ENCODE measurements at regions of chr13 and their contacts with region 1.

Region 1: DNA sequence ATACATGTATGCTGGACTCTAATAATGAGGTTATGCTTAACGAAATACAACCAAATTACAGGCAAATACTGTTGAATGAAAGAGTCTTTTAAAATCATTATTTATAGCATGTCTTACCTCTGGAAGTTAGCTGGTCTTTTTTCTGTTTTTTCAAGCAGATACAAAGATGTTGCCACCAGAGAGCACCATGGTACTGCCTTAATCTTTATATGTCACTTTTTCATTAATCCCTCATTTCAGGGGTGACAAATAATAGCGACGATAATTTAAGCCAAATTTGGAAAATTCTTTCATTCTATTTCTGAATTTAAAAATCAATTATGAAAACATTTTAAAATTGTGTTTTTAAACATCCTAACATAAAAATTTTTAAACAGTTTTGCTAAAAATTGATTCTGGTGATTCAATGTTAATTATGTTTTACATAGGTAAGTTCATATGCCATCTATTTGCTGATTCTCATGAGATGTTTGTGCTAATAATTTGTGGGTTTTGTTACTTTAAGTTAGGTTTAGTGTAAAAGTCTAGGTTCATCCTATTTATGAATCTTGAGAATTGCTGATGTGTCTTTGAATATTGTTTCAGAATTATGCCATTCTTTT is 379.3 kb upstream of the SGCG start:
- DNase-seq: no peak
- H3K4me3 Mint-ChIP-seq: no peak overlapping the region
- H3K27ac Mint-ChIP-seq: no peak overlapping the region
- H3K4me1 Mint-ChIP-seq: peaks cover 5% of the 10 kb centered on the region
- H3K27me3 Mint-ChIP-seq: no peaks in the 10 kb centered on the region
- CTCF ChIP-seq: no peak

Region 2: DNA sequence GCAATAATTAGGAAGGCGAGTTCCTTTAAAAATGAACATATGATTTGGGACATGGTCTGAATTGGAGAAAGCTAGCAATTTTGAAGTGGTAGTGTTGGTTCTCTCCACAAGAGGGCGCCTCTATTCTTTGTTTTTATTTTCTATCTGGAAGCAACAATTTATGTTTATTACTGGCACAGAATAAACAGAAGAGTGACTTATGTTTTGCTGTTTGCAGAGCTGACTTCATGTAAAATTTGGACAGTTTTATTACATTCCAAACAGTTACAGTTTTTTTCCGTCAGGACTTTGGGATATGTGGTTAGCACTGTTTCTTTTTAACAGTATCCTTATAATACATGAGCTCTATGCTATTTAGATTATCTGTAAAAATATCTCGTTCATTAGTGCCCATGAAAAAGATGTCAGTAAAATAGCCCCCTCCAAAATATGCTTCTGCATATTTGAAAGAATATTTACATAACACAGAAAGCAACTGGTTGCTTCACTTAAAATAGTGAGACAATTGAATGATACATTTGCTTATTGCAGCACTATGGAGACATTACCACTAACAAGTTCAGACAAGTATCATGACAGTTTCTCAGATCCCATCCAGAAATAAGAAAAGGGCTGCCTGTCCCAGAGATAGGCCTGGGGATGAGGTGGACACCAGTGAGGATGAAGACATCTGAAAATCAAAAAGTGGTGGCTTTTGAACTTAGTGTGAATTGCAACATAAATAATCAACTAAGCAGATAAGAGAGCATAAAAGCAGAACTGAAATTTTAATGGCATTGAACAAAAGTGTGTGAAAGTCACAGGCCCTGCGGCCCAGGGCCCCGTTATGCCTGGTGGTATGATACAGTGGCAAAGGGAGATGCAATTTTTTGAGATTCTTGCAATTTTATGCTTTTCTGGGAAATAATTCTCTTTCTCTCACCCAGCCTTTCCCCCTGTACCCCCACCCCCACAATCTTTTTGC is 1162.9 kb before region 1 on chr13:
- CTCF ChIA-PET with region 1: interaction called, 3 read pairs
- intact Hi-C with region 1: loop called (anchors 5 kb)
- DNase-seq: peak; percentile 27
- H3K4me3 Mint-ChIP-seq: no peak overlapping the region
- H3K27ac Mint-ChIP-seq: no peak overlapping the region
- H3K4me1 Mint-ChIP-seq: peaks cover 25% of the 10 kb centered on the region
- H3K27me3 Mint-ChIP-seq: no peaks in the 10 kb centered on the region
- CTCF ChIP-seq: peak; percentile 15

Region 3: GRCh38 chr13:23020223-23020843 is 218.8 kb after region 1 on chr13:
- CTCF ChIA-PET with region 1: interaction called, 17 read pairs
- intact Hi-C with region 1: loop called (anchors 1 kb)
- DNase-seq: peak; percentile 12
- H3K4me3 Mint-ChIP-seq: no peak overlapping the region
- H3K27ac Mint-ChIP-seq: no peak overlapping the region
- H3K4me1 Mint-ChIP-seq: no peaks in the 10 kb centered on the region
- H3K27me3 Mint-ChIP-seq: no peaks in the 10 kb centered on the region
- CTCF ChIP-seq: peak; percentile 40

Region 4: GRCh38 chr13:23175920-23176319 is 374.4 kb after region 1 on chr13:
- CTCF ChIA-PET with region 1: interaction called, 3 read pairs
- intact Hi-C with region 1: loop called (anchors 5 kb)
- DNase-seq: no peak
- H3K4me3 Mint-ChIP-seq: no peak overlapping the region
- H3K27ac Mint-ChIP-seq: no peak overlapping the region
- H3K4me1 Mint-ChIP-seq: no peaks in the 10 kb centered on the region
- H3K27me3 Mint-ChIP-seq: peaks cover 12% of the 10 kb centered on the region
- CTCF ChIP-seq: no peak

Region 5: DNA sequence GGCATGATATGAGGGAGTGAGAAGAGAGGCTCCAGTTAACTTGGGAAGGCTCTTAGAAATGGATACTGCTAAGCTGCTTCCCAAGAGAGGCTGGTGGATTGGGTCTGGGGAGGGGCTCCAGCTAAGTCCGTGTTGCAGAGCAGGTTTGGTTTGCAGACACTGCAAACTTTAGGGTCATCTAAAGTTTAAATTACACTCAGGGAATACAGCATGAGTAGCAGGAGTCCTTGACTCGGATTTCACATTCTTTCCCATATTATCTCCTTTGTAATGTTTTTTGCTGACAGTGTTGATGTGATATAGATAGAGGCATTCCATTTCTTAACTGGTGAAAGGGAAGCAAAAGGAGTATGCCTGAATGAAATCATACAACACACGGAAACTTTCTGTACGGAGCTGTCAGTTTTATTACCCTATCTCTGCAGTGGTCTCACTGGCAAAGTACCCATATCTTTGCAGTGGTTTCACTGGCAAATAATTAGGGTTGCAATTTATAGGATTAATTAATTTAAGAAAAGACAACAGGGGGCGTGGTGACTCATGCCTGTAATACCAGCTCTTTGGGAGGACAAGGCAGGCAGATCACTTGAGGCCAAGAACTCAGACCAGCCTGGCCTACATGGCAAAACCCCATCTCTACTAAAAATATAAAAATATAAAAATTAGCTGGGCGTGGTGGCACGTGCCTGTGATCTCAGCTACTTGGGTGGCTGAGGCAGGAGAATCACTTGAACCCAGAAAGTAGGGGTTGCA is 411.3 kb after region 1 on chr13:
- CTCF ChIA-PET with region 1: no interaction called
- intact Hi-C with region 1: no loop called
- DNase-seq: no peak
- H3K4me3 Mint-ChIP-seq: no peak overlapping the region
- H3K27ac Mint-ChIP-seq: no peak overlapping the region
- H3K4me1 Mint-ChIP-seq: no peaks in the 10 kb centered on the region
- H3K27me3 Mint-ChIP-seq: no peaks in the 10 kb centered on the region
- CTCF ChIP-seq: no peak

Region 6: GRCh38 chr13:23319883-23320224 is 518.4 kb after region 1 on chr13:
- CTCF ChIA-PET with region 1: no interaction called
- intact Hi-C with region 1: loop called (anchors 2 kb)
- DNase-seq: no peak
- H3K4me3 Mint-ChIP-seq: no peak overlapping the region
- H3K27ac Mint-ChIP-seq: no peak overlapping the region
- H3K4me1 Mint-ChIP-seq: no peaks in the 10 kb centered on the region
- H3K27me3 Mint-ChIP-seq: no peaks in the 10 kb centered on the region
- CTCF ChIP-seq: no peak